ENCODE measurements at regions of chr5 and their contacts with region 1.

Region 1: DNA sequence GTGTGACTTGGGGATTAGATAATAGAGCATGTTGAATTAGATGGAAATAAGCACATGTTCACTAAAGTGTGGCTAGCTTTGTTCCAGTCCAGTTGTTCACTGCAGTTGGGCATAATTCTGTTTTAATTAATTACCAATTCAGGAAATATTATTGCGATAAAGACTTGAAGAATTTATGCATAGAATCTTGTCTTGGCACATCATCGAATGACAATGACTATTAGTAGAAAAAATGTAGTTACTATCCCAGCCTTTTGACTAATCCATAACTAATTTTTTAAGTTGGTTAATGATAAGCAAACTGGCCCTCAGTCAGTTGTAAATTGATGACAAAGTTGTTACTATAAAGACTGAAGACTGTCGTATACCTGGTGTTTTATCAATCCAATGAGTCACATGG is 10.5 kb downstream of the LNPEP start:
- DNase-seq: no peak
- H3K4me3 ChIP-seq: no peak overlapping the region
- H3K27ac ChIP-seq: no peak overlapping the region
- H3K4me1 ChIP-seq: peaks cover 20% of the 10 kb centered on the region
- CTCF ChIP-seq: no peak

Region 2: DNA sequence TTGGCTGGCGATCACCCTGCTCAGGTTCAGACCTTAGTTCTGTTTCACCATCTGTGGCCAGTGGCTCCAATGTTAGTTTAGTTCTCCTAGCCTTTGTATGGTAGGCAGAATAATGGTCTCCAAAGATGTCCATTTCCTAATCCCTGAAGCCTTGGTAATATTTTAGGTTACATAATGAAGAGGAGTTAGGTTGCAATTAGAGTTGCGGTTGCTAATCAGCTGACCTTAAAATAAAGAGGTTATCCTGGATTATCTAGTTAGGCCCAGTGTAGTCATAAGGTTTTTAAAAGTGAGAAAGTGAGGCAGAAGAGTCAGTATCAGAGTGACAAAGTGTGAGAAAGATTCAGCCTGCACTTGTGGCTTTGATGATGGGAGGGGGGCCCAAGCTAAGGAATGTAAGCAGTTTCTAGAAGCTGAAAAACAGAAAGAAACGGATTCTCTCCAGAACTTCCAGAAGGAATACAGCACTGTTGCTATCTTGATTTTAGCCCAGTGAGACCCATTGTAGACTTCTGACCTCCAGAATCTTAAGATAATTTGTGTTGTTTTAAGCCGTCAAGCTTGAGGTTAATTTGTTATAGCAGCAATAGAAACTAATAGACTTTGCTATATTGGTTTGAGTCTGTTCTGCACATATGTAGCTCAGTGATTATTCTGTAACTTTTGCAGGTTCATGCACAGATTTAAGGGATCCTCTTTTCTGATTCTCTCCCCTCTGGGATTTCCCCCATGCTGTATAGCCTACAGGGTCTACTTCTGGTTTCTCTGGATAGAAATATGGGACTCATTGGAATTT is 11.1 kb after region 1 on chr5:
- CTCF ChIA-PET with region 1: no interaction called
- POLR2A ChIA-PET with region 1: interaction called, 18 read pairs
- intact Hi-C with region 1: no loop called
- DNase-seq: peak; percentile 33
- H3K4me3 ChIP-seq: peak overlapping the region; percentile 82
- H3K27ac ChIP-seq: peak overlapping the region; percentile 98
- H3K4me1 ChIP-seq: peaks cover 56% of the 10 kb centered on the region
- CTCF ChIP-seq: no peak

Measured in OCI-LY7 (cell line).